Left ventricle myocardium inferior (tissue), 1 donor: ENCODE measurements at regions of chr2 and their contacts with region 1.

Region 1: GRCh38 chr2:43226558-43226954 is at the start of gene ZFP36L2:
- DNase-seq: peak; percentile 97
- H3K4me3 ChIP-seq: peak within 1 kb of the TSS; percentile 94
- H3K27ac ChIP-seq: peak within 1 kb of the TSS; percentile 99
- H3K4me1 ChIP-seq: peaks cover 84% of the 10 kb centered on the region
- H3K27me3 ChIP-seq: no peaks in the 10 kb centered on the region
- CTCF ChIP-seq: peak; percentile 14
- total RNA-seq, gene ZFP36L2: 48.5 TPM

Region 2: DNA sequence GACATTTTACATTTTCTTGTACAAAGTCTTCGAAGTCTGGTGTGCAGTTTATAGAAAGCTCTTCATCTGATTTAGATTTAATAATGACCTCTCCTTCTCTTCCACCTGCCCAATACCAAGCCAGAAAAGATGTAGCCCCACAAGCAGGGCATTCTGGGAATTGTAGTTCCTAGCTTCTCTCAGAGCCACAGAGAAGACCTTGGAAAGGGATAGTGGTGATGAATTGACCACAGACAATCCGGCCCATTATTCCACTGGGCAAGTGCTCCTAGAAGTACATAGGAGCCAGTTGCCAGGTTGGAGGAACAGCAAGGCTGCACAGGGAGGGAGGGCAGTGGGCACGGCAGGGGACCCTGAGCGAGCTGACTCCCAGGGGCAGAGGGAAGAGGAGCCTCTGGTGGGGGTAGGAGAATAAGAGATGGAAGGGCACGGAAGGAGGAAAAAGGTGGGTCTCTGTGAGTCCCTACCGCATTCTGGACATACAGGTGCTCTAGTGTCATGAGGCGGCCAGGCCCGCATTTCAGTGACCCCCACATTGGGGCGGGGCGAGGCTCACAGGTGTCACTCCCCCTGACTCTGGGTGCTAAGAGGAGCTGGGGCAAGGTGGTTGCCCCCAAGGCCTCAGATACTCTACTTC is 281.7 kb before region 1 on chr2:
- intact Hi-C with region 1: loop called (anchors 10 kb)
- DNase-seq: no peak
- H3K4me3 ChIP-seq: no peak overlapping the region
- H3K27ac ChIP-seq: peak overlapping the region; percentile 65
- H3K4me1 ChIP-seq: peaks cover 46% of the 10 kb centered on the region
- H3K27me3 ChIP-seq: no peaks in the 10 kb centered on the region
- CTCF ChIP-seq: no peak

Region 3: DNA sequence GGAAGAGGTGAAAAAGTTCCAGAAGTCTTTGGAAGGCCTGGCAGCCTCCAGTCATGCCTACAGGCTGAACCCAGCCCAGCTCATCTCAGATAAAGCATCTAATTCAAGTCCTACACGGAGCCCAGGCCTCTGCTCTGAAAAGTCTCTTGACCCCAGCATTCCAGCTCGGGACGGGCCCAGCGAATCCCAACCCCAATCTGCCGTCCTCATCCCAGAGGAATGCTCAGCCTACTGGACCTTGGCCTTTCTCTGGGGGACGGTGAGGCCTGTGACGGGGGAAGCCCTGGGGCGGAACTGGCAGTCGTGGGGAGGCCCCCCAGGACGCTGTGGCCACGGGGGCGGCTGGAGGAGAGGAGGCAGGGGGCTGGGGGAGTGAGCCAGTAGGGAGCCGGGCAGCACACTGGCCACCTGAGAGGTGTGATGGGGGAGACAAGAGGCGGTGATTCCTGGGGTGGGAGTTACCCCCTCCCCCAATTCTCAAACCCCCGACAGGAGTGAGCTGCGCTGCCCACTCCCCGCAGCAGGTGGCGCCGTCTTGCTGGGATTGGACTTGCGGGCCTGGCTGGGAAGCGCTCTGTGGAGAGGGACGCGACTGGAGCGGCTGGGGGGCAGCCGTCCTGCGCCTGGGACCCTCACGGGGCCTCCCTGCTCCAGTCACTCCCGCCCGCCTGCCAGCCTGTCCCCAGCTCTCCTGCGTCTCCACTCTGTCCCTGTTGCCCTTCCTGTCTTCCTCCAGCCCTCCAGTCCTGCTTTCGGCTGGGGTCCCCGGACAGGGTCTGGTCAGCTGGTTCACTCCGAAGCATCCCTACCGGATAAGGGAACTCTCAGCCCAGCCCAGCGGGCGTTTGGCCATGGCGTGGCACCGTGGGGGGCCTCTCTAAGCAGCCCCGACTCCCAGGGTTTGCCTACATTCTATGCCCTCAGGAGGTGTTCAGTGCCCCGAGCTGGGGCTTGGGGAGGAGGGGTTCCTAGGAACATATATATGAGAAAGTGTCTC is 251.5 kb before region 1 on chr2:
- intact Hi-C with region 1: loop called (anchors 2 kb)
- DNase-seq: peak; percentile 79
- H3K4me3 ChIP-seq: peak overlapping the region; percentile 62
- H3K27ac ChIP-seq: peak overlapping the region; percentile 67
- H3K4me1 ChIP-seq: peaks cover 19% of the 10 kb centered on the region
- H3K27me3 ChIP-seq: no peaks in the 10 kb centered on the region
- CTCF ChIP-seq: peak; percentile 92

Region 4: GRCh38 chr2:43024515-43025011 is 202.0 kb before region 1 on chr2:
- intact Hi-C with region 1: loop called (anchors 5 kb)
- DNase-seq: peak; percentile 66
- H3K4me3 ChIP-seq: no peak overlapping the region
- H3K27ac ChIP-seq: no peak overlapping the region
- H3K4me1 ChIP-seq: peaks cover 29% of the 10 kb centered on the region
- H3K27me3 ChIP-seq: no peaks in the 10 kb centered on the region
- CTCF ChIP-seq: peak; percentile 83

Region 5: GRCh38 chr2:43131024-43131889 is 95.3 kb before region 1 on chr2:
- intact Hi-C with region 1: loop called (anchors 10 kb)
- DNase-seq: peak; percentile 63
- H3K4me3 ChIP-seq: no peak overlapping the region
- H3K27ac ChIP-seq: peak overlapping the region; percentile 65
- H3K4me1 ChIP-seq: peaks cover 60% of the 10 kb centered on the region
- H3K27me3 ChIP-seq: no peaks in the 10 kb centered on the region
- CTCF ChIP-seq: peak; percentile 61